ENCODE measurements at regions of chr5 and their contacts with region 1.

Region 1: GRCh38 chr5:165152058-165152457 is 1646.6 kb downstream of the MAT2B start:
- DNase-seq: no peak
- H3K4me3 Mint-ChIP-seq: no peak overlapping the region
- H3K27ac Mint-ChIP-seq: no peak overlapping the region
- H3K4me1 Mint-ChIP-seq: no peaks in the 10 kb centered on the region
- H3K27me3 Mint-ChIP-seq: no peaks in the 10 kb centered on the region
- CTCF ChIP-seq: no peak

Region 2: DNA sequence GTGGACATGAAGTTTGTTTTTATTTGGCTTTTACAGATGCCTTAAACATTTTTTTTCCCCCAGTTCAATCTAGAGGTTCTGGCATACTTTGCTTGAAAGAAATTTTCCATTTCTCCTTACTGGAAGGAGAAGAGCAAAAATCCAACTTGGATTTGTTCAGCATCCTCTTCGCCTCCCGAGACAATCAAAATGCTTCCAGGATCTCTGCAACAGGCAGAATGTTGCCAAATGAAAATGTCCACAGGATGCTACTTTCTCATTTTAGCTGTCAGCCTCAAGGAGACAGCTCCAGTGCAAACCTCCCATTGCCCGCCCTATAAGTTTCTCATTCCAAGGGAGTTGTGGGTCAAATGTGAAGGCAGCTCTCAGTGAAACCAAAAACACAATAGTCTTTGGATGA is 325.5 kb after region 1 on chr5:
- CTCF ChIA-PET with region 1: interaction called, 12 read pairs
- intact Hi-C with region 1: no loop called
- DNase-seq: no peak
- H3K4me3 Mint-ChIP-seq: no peak overlapping the region
- H3K27ac Mint-ChIP-seq: no peak overlapping the region
- H3K4me1 Mint-ChIP-seq: no peaks in the 10 kb centered on the region
- H3K27me3 Mint-ChIP-seq: no peaks in the 10 kb centered on the region
- CTCF ChIP-seq: no peak

Measured in Calu3 (cell line).